H1 (cell line): ENCODE measurements at regions of chr16 and their contacts with region 1.

Region 1: GRCh38 chr16:84714028-84714427 is 14.2 kb downstream of the USP10 start:
- DNase-seq: peak in 1 of 2 experiments; percentile 50
- H3K4me3 ChIP-seq: no peak overlapping the region
- H3K27ac ChIP-seq: no peak overlapping the region
- H3K4me1 ChIP-seq: peaks cover 2 to 24% (median 19%) of the 10 kb centered on the region in 4 experiments
- H3K27me3 ChIP-seq: no peaks in the 10 kb centered on the region
- CTCF ChIP-seq: no peak
- EP300 ChIP-seq: no peak
- POLR2A ChIP-seq: no peak
- RAD21 ChIP-seq: no peak

Region 2: GRCh38 chr16:84699712-84700445 is 14.1 kb before region 1 on chr16 and contains the start of gene USP10:
- CTCF ChIA-PET with region 1: interaction called, 7 read pairs
- POLR2A ChIA-PET with region 1: interaction called, 32 read pairs
- DNase-seq: peak; percentile 71 to 88
- H3K4me3 ChIP-seq: peak within 1 kb of the TSS; percentile 84 to 99 (median 88)
- H3K27ac ChIP-seq: peak within 1 kb of the TSS; percentile 92
- H3K4me1 ChIP-seq: peaks cover 0 to 9% (median 7%) of the 10 kb centered on the region in 4 experiments; a peak in 5 of 7 replicates
- H3K27me3 ChIP-seq: no peaks in the 10 kb centered on the region
- CTCF ChIP-seq: no peak
- EP300 ChIP-seq: 0 out of 3 replicates have a peak, but pooled peaks of 1 of the 2 experiments have one; percentile 34
- POLR2A ChIP-seq: peak; percentile 67 to 82; a peak in 2 of 3 replicates
- RAD21 ChIP-seq: no peak
- total RNA-seq, gene USP10: 186 and 195 TPM in 2 replicates